ENCODE measurements at regions of chr15 and their contacts with region 1.

Region 1: GRCh38 chr15:73305331-73306211 is 63.2 kb downstream of the HCN4 start:
- DNase-seq: peak; percentile 65
- ATAC-seq: peak; percentile 97
- H3K4me3 ChIP-seq: no peak overlapping the region
- H3K27ac ChIP-seq: no peak overlapping the region
- H3K4me1 ChIP-seq: no peaks in the 10 kb centered on the region
- H3K27me3 ChIP-seq: no peaks in the 10 kb centered on the region
- CTCF ChIP-seq: peak; percentile 66
- POLR2A ChIP-seq: no peak
- RAD21 ChIP-seq: peak; percentile 67

Region 2: DNA sequence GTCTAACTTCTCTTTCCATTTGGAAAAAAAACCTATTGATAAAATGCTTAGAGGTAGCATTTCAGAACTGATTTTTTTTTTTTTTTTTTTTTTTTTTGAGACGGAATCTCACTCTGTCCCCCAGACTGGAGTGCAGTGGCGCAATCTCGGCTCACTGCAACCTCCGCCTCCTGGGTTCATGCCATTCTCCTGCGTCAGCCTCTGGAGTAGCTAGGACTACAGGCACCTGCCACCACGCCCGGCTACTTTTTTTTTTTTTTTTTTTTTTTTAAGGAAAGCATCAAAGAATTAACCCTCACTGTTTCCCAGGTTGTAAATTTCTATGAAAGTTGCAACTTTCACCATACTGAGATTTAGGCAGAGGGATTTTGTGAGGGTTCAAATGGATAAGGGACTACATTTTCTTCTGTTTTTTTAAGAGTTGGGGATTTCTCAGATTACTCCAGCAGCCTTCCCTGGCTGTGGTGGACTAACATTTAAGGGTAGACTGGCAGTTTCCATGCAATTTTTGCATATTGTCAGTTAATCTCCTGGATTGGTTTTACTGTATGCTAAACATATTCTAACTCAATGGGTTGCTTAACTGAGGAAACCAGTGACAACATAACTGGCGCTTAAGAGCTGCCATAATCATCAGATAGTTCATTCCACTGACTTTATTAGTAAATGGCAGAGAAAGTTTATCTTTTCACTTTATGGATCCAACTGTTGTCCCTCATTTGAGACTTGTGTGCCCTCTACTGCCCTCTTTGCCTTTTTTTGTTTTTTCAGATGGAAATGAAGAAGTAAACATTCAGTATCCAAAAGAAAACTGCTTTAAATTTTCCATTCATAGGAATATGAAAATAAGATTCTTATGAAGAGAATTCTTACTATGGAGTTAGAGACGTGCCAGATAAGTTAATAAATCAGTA is 233.9 kb after region 1 on chr15:
- CTCF ChIA-PET with region 1: no interaction called
- POLR2A ChIA-PET with region 1: no interaction called
- dilution Hi-C with region 1: no loop called
- in situ Hi-C with region 1: no loop called
- intact Hi-C with region 1: loop called (anchors 5 kb)
- DNase-seq: no peak
- ATAC-seq: no peak
- H3K4me3 ChIP-seq: no peak overlapping the region
- H3K27ac ChIP-seq: no peak overlapping the region
- H3K4me1 ChIP-seq: no peaks in the 10 kb centered on the region
- H3K27me3 ChIP-seq: no peaks in the 10 kb centered on the region
- CTCF ChIP-seq: no peak
- POLR2A ChIP-seq: no peak
- RAD21 ChIP-seq: no peak

Region 3: DNA sequence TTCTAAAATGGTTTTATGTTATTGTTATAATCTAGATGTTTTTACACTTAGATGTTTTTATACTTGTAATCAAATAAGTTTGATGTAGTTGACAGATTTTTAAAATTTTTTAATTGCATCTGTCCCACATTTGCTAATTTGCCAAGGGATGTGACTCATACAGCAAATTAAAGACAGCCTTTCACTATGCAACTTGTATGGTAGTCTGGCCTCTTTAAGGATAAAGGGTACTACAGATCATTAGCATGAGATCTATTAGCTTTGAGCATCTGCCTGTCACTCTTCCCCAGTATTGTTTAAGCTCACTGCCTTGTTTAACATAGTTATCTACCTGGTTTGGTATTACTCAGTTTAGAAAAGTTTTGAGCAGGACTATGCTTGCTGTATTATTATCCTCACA is 244.6 kb after region 1 on chr15:
- CTCF ChIA-PET with region 1: no interaction called
- POLR2A ChIA-PET with region 1: no interaction called
- dilution Hi-C with region 1: no loop called
- in situ Hi-C with region 1: loop called (anchors 10 kb)
- intact Hi-C with region 1: no loop called
- DNase-seq: no peak
- ATAC-seq: 0 out of 2 replicates have a peak, but pooled peaks have one; percentile 24
- H3K4me3 ChIP-seq: no peak overlapping the region
- H3K27ac ChIP-seq: no peak overlapping the region
- H3K4me1 ChIP-seq: no peaks in the 10 kb centered on the region
- H3K27me3 ChIP-seq: no peaks in the 10 kb centered on the region
- CTCF ChIP-seq: no peak
- POLR2A ChIP-seq: no peak
- RAD21 ChIP-seq: no peak

Region 4: DNA sequence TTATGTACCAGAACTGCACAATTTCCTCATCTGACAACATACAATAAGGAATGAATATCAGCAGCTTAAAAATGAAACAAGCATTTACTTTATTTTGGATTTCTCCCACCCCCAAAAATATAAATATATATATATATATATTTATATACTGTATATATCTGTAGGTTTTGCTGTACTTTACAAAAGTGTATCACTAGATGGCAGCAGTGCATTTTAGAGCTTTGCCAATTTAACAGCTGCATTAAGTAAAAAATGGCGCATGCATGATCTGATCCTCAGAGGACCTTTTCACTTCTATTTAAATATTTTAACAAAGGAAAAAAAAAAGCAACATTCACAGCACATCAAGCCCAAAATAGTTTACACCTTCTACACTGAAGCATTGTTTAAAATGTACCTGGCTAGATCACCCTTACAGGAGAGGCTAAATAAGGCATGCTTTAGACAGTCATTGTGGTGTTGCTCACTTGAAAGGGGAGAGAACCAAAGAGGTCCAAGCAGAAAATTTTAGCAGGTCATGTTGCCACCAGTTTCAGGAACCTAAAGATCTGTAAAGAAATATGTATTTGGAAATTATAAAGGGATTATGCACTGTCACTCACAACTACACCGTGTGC is 255.0 kb after region 1 on chr15:
- CTCF ChIA-PET with region 1: no interaction called
- POLR2A ChIA-PET with region 1: no interaction called
- dilution Hi-C with region 1: no loop called
- in situ Hi-C with region 1: loop called (anchors 10 kb)
- intact Hi-C with region 1: loop called (anchors 1 kb)
- DNase-seq: peak; percentile 84
- ATAC-seq: peak; percentile 70
- H3K4me3 ChIP-seq: no peak overlapping the region
- H3K27ac ChIP-seq: no peak overlapping the region
- H3K4me1 ChIP-seq: peaks cover 13% of the 10 kb centered on the region
- H3K27me3 ChIP-seq: no peaks in the 10 kb centered on the region
- CTCF ChIP-seq: peak; percentile 69
- POLR2A ChIP-seq: no peak
- RAD21 ChIP-seq: peak; percentile 76

Measured in IMR-90 (cell line).